ENCODE measurements at regions of chr6 and their contacts with region 1.

Region 1: GRCh38 chr6:109373762-109374161 is 8.5 kb downstream of the CD164 start:
- DNase-seq: peak; percentile 89
- ATAC-seq: peak; percentile 95
- H3K4me3 ChIP-seq: peak overlapping the region; percentile 46; the same call in 1 of the 2 replicates
- H3K27ac ChIP-seq: peak overlapping the region; percentile 68
- H3K4me1 ChIP-seq: peaks cover 29% of the 10 kb centered on the region
- H3K27me3 ChIP-seq: no peaks in the 10 kb centered on the region
- CTCF ChIP-seq: no peak
- EP300 ChIP-seq: peak; percentile 80 to 86; a peak in 3 of 4 replicates
- POLR2A ChIP-seq: no peak
- RAD21 ChIP-seq: no peak

Region 2: GRCh38 chr6:107957909-107958688 is 1415.7 kb before region 1 on chr6 and contains the start of gene SEC63:
- CTCF ChIA-PET with region 1: no interaction called
- POLR2A ChIA-PET with region 1: no interaction called
- RAD21 ChIA-PET with region 1: no interaction called
- SMC1A ChIA-PET with region 1: no interaction called
- in situ Hi-C with region 1: no loop called
- intact Hi-C with region 1: loop called (anchors 5 kb)
- DNase-seq: peak; percentile 87
- ATAC-seq: peak; percentile 95
- H3K4me3 ChIP-seq: peak within 1 kb of the TSS; percentile 86
- H3K27ac ChIP-seq: peak within 1 kb of the TSS; percentile 76
- H3K4me1 ChIP-seq: no peaks in the 10 kb centered on the region; the same call in 1 of the 2 replicates
- H3K27me3 ChIP-seq: no peaks in the 10 kb centered on the region
- CTCF ChIP-seq: no peak
- EP300 ChIP-seq: no peak
- POLR2A ChIP-seq: peak; percentile 96
- RAD21 ChIP-seq: no peak
- polyA plus RNA-seq, gene SEC63: 22.9 to 28.5 TPM

Region 3: DNA sequence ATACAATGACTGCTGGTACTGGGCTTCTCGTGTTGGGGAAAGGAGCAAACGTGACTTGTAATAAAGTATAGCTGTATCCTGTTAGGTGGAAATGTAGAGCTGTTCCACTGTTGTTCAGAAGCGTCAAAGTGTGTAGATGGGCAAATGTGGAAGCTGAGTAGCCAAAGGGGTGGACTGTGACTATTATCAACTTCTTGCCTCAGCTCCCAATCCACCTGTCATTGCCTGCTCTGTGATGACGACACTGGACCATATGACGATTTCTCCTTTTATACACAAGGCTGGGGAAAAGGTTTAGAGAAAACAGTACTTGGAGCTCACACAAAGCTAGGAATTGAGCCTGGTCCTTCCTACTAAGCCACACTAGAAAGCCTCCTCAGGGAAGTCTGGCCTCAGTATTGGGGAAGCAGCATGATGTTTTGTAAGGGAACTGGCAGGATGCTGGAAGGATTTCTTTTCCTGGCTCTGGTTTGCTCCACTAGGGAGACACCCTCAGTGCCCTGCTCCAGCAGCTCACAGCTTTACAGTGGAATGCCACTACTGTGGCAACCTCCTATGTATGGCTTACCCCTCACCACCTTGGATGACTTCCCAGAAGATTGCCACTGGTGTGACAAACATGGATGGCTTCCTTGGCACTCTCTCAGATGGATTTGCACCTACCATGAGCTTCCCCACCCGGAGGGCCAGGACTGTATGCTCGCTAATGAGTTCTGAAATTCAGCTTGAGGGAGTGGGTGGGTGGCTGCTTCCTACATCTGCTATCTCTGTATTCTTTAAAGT is 11.5 kb before region 1 on chr6:
- CTCF ChIA-PET with region 1: interaction called, 4 read pairs
- POLR2A ChIA-PET with region 1: interaction called, 4 read pairs
- RAD21 ChIA-PET with region 1: interaction called, 10 read pairs
- SMC1A ChIA-PET with region 1: interaction called, 19 read pairs
- in situ Hi-C with region 1: no loop called
- intact Hi-C with region 1: no loop called
- DNase-seq: no peak
- ATAC-seq: no peak
- H3K4me3 ChIP-seq: no peak overlapping the region
- H3K27ac ChIP-seq: no peak overlapping the region
- H3K4me1 ChIP-seq: no peaks in the 10 kb centered on the region
- H3K27me3 ChIP-seq: no peaks in the 10 kb centered on the region
- CTCF ChIP-seq: no peak
- EP300 ChIP-seq: no peak
- POLR2A ChIP-seq: peak; percentile 29; the same call in 1 of the 2 replicates
- RAD21 ChIP-seq: no peak